CD4-positive, alpha-beta memory T cell (primary cell): ENCODE measurements at regions of chr10 and their contacts with region 1.

Region 1: GRCh38 chr10:97425964-97426775 is at the start of gene PGAM1:
- DNase-seq: peak; percentile 94 to 99 (median 98)
- H3K4me3 ChIP-seq: peak within 1 kb of the TSS; percentile 62 to 70
- H3K4me3 Mint-ChIP-seq: peak within 1 kb of the TSS; percentile 90 to 98 (median 94)
- H3K27ac ChIP-seq: peak within 1 kb of the TSS; percentile 83
- H3K27ac Mint-ChIP-seq: peak within 1 kb of the TSS; percentile 94 to 98 (median 97)
- H3K4me1 ChIP-seq: peaks cover 42% of the 10 kb centered on the region
- H3K4me1 Mint-ChIP-seq: peaks cover 26 to 61% (median 37%) of the 10 kb centered on the region in 4 donors
- H3K27me3 ChIP-seq: no peaks in the 10 kb centered on the region
- H3K27me3 Mint-ChIP-seq: peaks cover 0 to 2% of the 10 kb centered on the region in 2 donors
- total RNA-seq, gene PGAM1: 95.7 to 102 TPM

Region 2: DNA sequence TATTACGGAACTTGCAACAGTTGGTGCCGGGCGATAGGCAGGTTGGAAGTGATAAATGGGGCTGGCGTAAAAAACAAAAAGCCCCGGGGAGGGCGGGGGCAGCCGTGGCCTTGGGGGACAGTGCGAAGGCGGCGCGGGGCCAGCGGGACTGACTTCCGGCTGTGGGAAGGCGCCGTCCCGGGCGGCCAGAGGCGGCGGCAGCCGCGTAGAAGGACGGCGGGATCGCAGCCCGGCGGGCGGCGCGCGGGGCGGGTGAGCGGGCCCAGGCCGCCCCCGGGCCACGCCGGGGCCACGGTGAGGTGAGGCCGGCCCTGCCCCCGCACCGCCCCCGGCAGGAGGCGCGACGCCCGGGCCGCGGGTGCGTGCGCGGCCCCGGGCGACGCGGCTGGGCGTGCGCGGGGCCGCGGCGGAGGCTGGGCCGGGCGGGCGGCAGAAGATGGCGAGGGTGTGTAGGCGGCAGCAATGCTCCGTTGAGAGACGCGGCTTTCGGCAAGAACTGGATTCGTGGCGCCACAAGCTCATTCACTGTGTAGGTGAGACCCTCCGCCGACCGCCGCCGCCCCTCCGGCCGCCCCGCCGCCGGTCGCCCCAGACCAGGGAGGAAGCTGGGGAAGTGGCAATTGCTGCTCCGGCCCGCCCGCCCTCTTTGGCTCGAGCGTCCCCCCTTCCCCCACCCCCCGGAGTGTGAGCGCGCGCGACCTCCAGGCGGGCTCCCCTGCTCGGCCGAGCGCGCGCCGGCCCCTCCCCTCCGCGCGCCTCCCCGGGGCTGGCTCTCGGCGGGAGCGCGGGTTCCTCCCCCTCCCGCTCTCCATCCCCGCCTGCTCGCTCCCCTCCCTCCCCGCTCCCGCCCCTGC is 594.1 kb before region 1 on chr10 and contains the start of gene LCOR:
- CTCF ChIA-PET with region 1: no interaction called
- POLR2A ChIA-PET with region 1: no interaction called
- intact Hi-C with region 1: loop called (anchors 5 kb)
- DNase-seq: peak; percentile 84 to 91 (median 87)
- H3K4me3 ChIP-seq: peak within 1 kb of the TSS; percentile 61 to 68
- H3K4me3 Mint-ChIP-seq: peak within 1 kb of the TSS; percentile 89 to 96 (median 92)
- H3K27ac ChIP-seq: peak within 1 kb of the TSS; percentile 72
- H3K27ac Mint-ChIP-seq: peak within 1 kb of the TSS; percentile 94 to 99 (median 97)
- H3K4me1 ChIP-seq: peaks cover 53% of the 10 kb centered on the region
- H3K4me1 Mint-ChIP-seq: peaks cover 35 to 56% (median 46%) of the 10 kb centered on the region in 4 donors
- H3K27me3 ChIP-seq: no peaks in the 10 kb centered on the region
- H3K27me3 Mint-ChIP-seq: no peaks in the 10 kb centered on the region
- total RNA-seq, gene LCOR: 44.1 to 44.9 TPM

Region 3: GRCh38 chr10:97365761-97366351 is 60.3 kb before region 1 on chr10:
- CTCF ChIA-PET with region 1: no interaction called
- POLR2A ChIA-PET with region 1: no interaction called
- intact Hi-C with region 1: no loop called
- DNase-seq: no peak
- H3K4me3 ChIP-seq: no peak overlapping the region
- H3K4me3 Mint-ChIP-seq: no peak overlapping the region
- H3K27ac ChIP-seq: no peak overlapping the region
- H3K27ac Mint-ChIP-seq: peak overlapping the region in 1 of 7 donors; percentile 19
- H3K4me1 ChIP-seq: no peaks in the 10 kb centered on the region
- H3K4me1 Mint-ChIP-seq: no peaks in the 10 kb centered on the region
- H3K27me3 ChIP-seq: no peaks in the 10 kb centered on the region
- H3K27me3 Mint-ChIP-seq: no peaks in the 10 kb centered on the region

Region 4: GRCh38 chr10:97400665-97401454 is 25.3 kb before region 1 on chr10 and contains the start of gene RRP12:
- CTCF ChIA-PET with region 1: interaction called, 75 read pairs
- POLR2A ChIA-PET with region 1: interaction called, 16 read pairs
- intact Hi-C with region 1: loop called (anchors 1 kb)
- DNase-seq: peak; percentile 89 to 97 (median 95)
- H3K4me3 ChIP-seq: peak within 1 kb of the TSS; percentile 71
- H3K4me3 Mint-ChIP-seq: peak within 1 kb of the TSS; percentile 95 to 99 (median 96)
- H3K27ac ChIP-seq: peak within 1 kb of the TSS; percentile 88
- H3K27ac Mint-ChIP-seq: peak within 1 kb of the TSS; percentile 94 to 99 (median 99)
- H3K4me1 ChIP-seq: peaks cover 15% of the 10 kb centered on the region
- H3K4me1 Mint-ChIP-seq: peaks cover 11 to 23% (median 15%) of the 10 kb centered on the region in 4 donors
- H3K27me3 ChIP-seq: no peaks in the 10 kb centered on the region
- H3K27me3 Mint-ChIP-seq: no peaks in the 10 kb centered on the region
- total RNA-seq, gene RRP12: 18.2 to 20.0 TPM

Region 5: GRCh38 chr10:97412891-97413304 is 13.3 kb before region 1 on chr10:
- CTCF ChIA-PET with region 1: interaction called, 75 read pairs
- POLR2A ChIA-PET with region 1: interaction called, 16 read pairs
- intact Hi-C with region 1: loop called (anchors 1 kb)
- DNase-seq: no peak
- H3K4me3 ChIP-seq: no peak overlapping the region
- H3K4me3 Mint-ChIP-seq: peak overlapping the region in 4 of 8 donors; percentile 2 to 60 (median 23)
- H3K27ac ChIP-seq: no peak overlapping the region
- H3K27ac Mint-ChIP-seq: peak overlapping the region; percentile 34 to 91 (median 79)
- H3K4me1 ChIP-seq: peaks cover 38% of the 10 kb centered on the region
- H3K4me1 Mint-ChIP-seq: peaks cover 20 to 43% (median 31%) of the 10 kb centered on the region in 4 donors
- H3K27me3 ChIP-seq: no peaks in the 10 kb centered on the region
- H3K27me3 Mint-ChIP-seq: no peaks in the 10 kb centered on the region

Region 6: DNA sequence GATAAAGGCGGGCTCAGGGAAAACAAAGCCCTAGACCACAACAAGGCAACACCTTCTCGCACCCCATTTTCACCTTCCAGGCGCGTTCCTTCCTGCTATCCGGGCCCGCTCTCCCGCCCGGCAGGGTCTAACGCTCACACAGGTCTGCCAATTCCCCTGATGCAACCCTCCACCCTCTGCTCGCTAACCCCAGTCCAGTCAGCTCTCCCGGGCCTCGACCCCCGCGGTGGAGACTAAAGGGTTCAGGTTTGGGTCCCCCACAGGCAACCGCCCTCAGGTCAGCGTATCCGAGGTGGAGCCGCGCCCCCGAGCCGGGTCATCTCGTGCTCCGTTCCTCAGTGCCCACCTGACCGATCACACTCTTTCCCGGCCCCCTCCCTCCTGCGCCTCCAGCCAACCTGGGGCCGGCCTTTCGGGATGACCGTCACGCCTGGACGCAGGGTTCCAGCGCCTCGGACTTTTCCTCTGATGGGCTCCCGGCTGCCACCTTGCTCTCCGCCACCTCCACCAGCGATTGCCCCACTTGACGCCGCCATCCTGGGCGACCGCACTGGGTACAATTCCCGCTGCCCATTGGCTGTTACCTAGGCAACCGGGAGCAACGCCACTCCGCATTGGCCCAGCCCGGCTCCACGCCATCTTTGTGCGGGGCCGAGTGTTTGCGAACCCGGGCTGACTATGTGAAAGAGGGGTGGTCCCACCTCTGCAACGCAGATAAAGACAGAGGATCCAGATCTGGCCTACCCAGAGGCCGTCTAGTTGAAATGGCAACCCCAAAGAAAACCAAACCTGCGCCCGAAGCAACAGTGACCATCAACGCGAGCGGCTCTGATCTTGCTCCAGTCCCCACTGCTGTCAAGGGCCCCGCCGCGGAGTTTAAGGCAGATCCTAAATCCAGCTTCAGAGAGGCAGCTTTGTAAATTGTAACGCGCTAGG is 207.0 kb after region 1 on chr10 and contains the start of gene MORN4:
- CTCF ChIA-PET with region 1: no interaction called
- POLR2A ChIA-PET with region 1: no interaction called
- intact Hi-C with region 1: loop called (anchors 5 kb)
- DNase-seq: peak; percentile 91 to 92 (median 91)
- H3K4me3 ChIP-seq: peak within 1 kb of the TSS; percentile 53 to 55
- H3K4me3 Mint-ChIP-seq: peak within 1 kb of the TSS; percentile 92 to 99 (median 97)
- H3K27ac ChIP-seq: peak within 1 kb of the TSS; percentile 36
- H3K27ac Mint-ChIP-seq: peak within 1 kb of the TSS; percentile 83 to 97 (median 91)
- H3K4me1 ChIP-seq: peaks cover 10% of the 10 kb centered on the region
- H3K4me1 Mint-ChIP-seq: peaks cover 7 to 19% (median 14%) of the 10 kb centered on the region in 4 donors
- H3K27me3 ChIP-seq: no peaks in the 10 kb centered on the region
- H3K27me3 Mint-ChIP-seq: no peaks in the 10 kb centered on the region
- total RNA-seq, gene MORN4: 2.1 to 3.0 TPM

Region 7: DNA sequence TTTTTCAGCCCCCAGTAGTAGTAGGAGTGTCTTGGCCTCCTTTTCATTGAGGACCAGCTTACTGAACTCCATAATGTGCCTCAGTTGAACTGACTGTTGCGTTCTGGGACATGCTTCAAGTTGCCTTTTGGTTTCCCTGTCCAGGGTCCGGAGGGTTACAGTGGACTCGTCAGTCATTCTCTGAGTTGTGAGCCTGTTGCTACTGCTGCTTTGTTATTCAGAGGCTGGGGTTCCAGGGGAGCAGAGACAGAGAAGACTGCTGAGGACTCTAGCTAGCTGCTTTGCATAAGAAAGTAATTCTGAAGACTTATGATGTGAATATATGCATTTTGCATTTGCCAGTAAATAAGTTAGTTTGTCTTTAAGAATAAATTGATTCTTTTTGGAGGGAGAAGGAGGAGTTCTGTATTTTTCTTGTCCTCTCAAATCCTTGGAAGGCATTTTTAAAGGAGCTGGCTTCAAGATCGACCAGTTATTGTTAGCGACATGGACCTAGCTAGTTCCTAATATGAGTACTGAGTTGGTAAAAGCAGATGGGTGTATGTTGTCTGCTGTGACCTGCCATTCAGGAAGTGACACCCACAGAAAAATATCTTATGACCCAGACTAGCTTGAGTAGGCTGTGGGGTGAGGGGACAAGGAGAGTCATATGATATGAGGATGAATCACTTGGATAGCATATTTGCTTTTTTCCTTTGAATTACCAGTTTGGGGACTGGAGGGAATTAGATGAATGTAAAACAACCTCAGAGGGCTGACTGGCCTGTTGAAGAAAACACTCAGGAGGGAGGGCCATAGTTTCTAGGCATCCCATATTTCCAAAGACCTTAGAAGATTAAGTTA is 222.6 kb after region 1 on chr10:
- CTCF ChIA-PET with region 1: no interaction called
- POLR2A ChIA-PET with region 1: no interaction called
- intact Hi-C with region 1: no loop called
- DNase-seq: peak; percentile 33 to 67 (median 40)
- H3K4me3 ChIP-seq: no peak overlapping the region
- H3K4me3 Mint-ChIP-seq: peak overlapping the region in 7 of 8 donors; percentile 3 to 64 (median 53)
- H3K27ac ChIP-seq: peak overlapping the region; percentile 34
- H3K27ac Mint-ChIP-seq: peak overlapping the region; percentile 75 to 93 (median 89)
- H3K4me1 ChIP-seq: peaks cover 13% of the 10 kb centered on the region
- H3K4me1 Mint-ChIP-seq: peaks cover 12 to 22% (median 19%) of the 10 kb centered on the region in 4 donors
- H3K27me3 ChIP-seq: no peaks in the 10 kb centered on the region
- H3K27me3 Mint-ChIP-seq: no peaks in the 10 kb centered on the region